ENCODE measurements at regions of chr1 and their contacts with region 1.

Region 1: GRCh38 chr1:214551436-214552173 is at the start of gene PTPN14:
- DNase-seq: peak; percentile 82
- ATAC-seq: peak; percentile 86
- H3K4me3 ChIP-seq: peak within 1 kb of the TSS; percentile 89 to 97 (median 90)
- H3K27ac ChIP-seq: peak within 1 kb of the TSS; percentile 64
- H3K4me1 ChIP-seq: peaks cover 59% of the 10 kb centered on the region
- H3K27me3 ChIP-seq: peaks cover 0 to 4% of the 10 kb centered on the region in 2 experiments; a peak in 2 of 5 replicates
- CTCF ChIP-seq: peak; percentile 48
- EP300 ChIP-seq: peak in 1 of 2 experiments; percentile 12; a peak in 1 of 4 replicates
- POLR2A ChIP-seq: peak; percentile 43 to 53; a peak in 2 of 4 replicates
- RAD21 ChIP-seq: peak; percentile 60
- total RNA-seq, gene PTPN14: 4.7 and 8.4 TPM in 2 replicates

Region 2: GRCh38 chr1:214446772-214447556 is 104.6 kb before region 1 on chr1:
- CTCF ChIA-PET with region 1: no interaction called
- POLR2A ChIA-PET with region 1: no interaction called
- in situ Hi-C with region 1: no loop called
- intact Hi-C with region 1: loop called (anchors 1 kb)
- DNase-seq: peak; percentile 85
- ATAC-seq: peak; percentile 99
- H3K4me3 ChIP-seq: peak overlapping the region; percentile 41 to 62 (median 56); a peak in 5 of 6 replicates
- H3K27ac ChIP-seq: peak overlapping the region; percentile 28
- H3K4me1 ChIP-seq: peaks cover 20% of the 10 kb centered on the region
- H3K27me3 ChIP-seq: no peaks in the 10 kb centered on the region; a peak in 1 of 5 replicates
- CTCF ChIP-seq: no peak
- EP300 ChIP-seq: 0 out of 4 replicates have a peak, but pooled peaks of 1 of the 2 experiments have one; percentile 17
- POLR2A ChIP-seq: no peak
- RAD21 ChIP-seq: no peak

Region 3: DNA sequence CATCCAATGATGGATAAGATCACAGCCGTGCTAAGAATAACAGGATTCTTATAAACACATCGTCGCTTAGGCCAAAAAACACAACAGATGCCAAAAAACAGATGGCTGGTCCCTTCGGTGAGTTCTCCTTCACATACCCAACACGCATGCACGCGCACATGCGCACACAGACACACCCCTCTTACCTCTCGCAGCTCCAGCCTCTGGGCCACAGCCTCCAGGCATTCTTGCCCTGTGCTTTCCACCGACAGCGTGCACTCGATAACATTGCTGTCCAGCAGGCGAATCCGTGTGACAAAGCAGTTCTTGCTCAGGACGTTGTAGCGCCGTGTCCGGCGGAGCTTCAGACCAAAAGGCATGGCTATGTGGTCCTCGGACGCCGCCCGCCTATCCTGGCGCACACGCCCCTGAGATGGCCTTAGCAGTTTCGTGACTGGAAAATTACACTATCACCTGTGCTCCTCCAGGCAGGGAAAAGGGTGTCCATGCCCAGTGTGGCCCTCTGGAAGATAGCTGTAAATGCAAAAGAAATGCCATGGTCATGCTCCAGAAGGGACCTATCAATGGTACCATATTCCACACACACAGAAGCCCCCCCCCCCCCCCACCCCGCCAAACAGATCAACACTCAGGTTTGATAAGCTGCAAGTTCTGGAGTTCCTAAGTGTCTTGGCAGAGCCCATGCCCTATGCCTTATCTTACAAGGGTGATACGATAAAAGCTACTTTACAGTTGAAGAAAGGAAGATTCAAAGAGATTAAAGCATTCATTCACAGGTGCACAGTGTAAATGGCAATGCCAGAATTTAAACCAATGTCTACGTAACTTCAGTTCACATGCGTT is 86.9 kb before region 1 on chr1:
- CTCF ChIA-PET with region 1: no interaction called
- POLR2A ChIA-PET with region 1: no interaction called
- in situ Hi-C with region 1: no loop called
- intact Hi-C with region 1: loop called (anchors 5 kb)
- DNase-seq: no peak
- ATAC-seq: no peak
- H3K4me3 ChIP-seq: no peak overlapping the region
- H3K27ac ChIP-seq: no peak overlapping the region
- H3K4me1 ChIP-seq: peaks cover 31% of the 10 kb centered on the region
- H3K27me3 ChIP-seq: no peaks in the 10 kb centered on the region
- CTCF ChIP-seq: no peak
- EP300 ChIP-seq: no peak
- POLR2A ChIP-seq: no peak
- RAD21 ChIP-seq: no peak

Region 4: GRCh38 chr1:214506972-214507482 is 44.6 kb before region 1 on chr1:
- CTCF ChIA-PET with region 1: no interaction called
- POLR2A ChIA-PET with region 1: interaction called, 3 read pairs
- in situ Hi-C with region 1: loop called (anchors 5 kb)
- intact Hi-C with region 1: loop called (anchors 2 kb)
- DNase-seq: peak; percentile 93
- ATAC-seq: peak; percentile 99
- H3K4me3 ChIP-seq: peak overlapping the region in 2 of 3 experiments; percentile 28 to 36; a peak in 2 of 6 replicates
- H3K27ac ChIP-seq: no peak overlapping the region
- H3K4me1 ChIP-seq: peaks cover 51% of the 10 kb centered on the region
- H3K27me3 ChIP-seq: no peaks in the 10 kb centered on the region
- CTCF ChIP-seq: no peak
- EP300 ChIP-seq: peak in 1 of 2 experiments; percentile 67; a peak in 2 of 4 replicates
- POLR2A ChIP-seq: no peak
- RAD21 ChIP-seq: no peak

Region 5: DNA sequence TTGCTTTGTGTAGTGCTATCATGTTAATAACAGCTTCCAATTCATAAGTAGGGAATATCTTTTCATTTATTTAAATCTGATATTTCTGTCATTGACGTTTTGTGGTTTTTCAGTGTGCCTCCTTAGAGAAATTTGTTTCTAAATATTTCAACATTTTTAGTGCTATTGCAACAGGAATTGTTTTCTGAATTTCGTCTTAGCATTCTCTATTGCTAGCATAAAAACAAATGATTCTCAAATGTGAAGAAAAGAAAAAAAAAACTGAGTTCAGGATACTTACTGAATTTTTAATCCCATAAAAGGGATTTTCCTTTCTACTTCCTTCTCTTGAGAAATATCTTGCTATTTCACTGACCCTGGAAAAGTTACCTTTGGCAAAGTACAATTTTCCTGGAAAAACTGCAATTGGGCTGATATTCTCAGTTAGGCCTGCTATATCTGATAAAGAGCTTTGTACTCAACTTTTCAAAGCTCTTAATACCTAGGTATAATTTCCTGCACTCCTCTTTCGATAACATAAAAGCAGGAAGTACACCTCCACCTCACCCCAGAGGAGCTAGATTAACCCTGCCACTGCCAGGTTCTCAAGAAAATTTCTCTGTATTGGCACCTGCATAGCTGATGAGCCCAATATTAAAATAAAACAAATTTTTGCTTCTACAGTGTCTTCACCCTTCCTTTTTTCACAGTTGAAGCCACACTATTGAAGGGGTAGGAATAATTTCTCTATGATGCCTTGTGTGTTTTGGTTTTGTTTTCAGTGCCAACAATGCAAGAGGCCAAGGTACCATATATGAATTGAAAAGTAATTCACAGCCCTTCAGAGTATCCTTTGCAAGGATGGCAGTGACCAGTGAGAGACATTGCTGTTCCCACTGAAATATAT is 35.8 kb before region 1 on chr1:
- CTCF ChIA-PET with region 1: no interaction called
- POLR2A ChIA-PET with region 1: no interaction called
- in situ Hi-C with region 1: no loop called
- intact Hi-C with region 1: loop called (anchors 2 kb)
- DNase-seq: no peak
- ATAC-seq: no peak
- H3K4me3 ChIP-seq: no peak overlapping the region
- H3K27ac ChIP-seq: no peak overlapping the region
- H3K4me1 ChIP-seq: peaks cover 16% of the 10 kb centered on the region
- H3K27me3 ChIP-seq: no peaks in the 10 kb centered on the region
- CTCF ChIP-seq: no peak
- EP300 ChIP-seq: no peak
- POLR2A ChIP-seq: no peak
- RAD21 ChIP-seq: no peak

Region 6: GRCh38 chr1:214573386-214574358 is 22.1 kb after region 1 on chr1:
- CTCF ChIA-PET with region 1: no interaction called
- POLR2A ChIA-PET with region 1: no interaction called
- in situ Hi-C with region 1: no loop called
- intact Hi-C with region 1: no loop called
- DNase-seq: no peak
- ATAC-seq: no peak
- H3K4me3 ChIP-seq: no peak overlapping the region
- H3K27ac ChIP-seq: no peak overlapping the region
- H3K4me1 ChIP-seq: no peaks in the 10 kb centered on the region
- H3K27me3 ChIP-seq: peaks cover 0 to 12% of the 10 kb centered on the region in 2 experiments; a peak in 3 of 5 replicates
- CTCF ChIP-seq: no peak
- EP300 ChIP-seq: no peak
- POLR2A ChIP-seq: no peak
- RAD21 ChIP-seq: no peak

Region 7: DNA sequence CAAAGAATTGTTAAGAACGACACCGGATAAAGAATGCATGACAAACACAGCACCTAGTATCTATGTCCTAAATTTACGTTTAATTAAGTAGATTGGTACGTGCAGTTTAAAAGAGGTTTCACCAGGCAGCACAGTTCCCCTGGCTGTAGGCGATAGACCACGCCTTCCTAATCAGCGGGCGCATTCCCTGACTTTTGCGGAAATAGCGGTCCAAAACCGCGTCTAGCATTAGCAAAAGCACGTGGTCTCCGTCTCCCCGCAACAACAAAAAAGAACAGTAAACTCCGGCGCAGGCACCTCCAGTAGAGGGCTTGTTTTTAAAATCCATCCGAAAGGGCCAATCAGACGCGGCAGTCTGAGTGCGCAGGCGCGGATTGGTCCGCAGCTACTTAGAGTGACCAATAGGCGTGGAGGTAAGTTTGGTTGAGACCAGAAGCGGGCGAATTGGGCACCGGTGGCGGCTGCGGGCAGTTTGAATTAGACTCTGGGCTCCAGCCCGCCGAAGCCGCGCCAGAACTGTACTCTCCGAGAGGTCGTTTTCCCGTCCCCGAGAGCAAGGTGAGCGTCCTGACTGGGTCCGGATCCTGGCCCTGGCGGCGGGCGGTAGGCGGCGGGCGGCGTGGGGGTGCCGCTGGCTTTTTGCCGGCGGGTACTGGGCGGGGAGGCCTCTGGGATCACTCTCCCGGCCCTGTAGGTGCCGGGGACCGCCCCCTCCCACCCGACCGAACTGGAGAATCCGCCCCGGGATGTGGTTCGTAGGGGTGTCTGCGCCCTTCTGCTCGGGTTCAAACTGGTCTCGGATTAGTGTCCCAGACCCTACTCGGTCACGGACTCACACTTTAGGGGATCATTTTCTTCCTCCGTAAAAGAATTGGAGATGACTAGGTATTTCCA is 51.4 kb after region 1 on chr1 and contains the start of gene CENPF:
- CTCF ChIA-PET with region 1: no interaction called
- POLR2A ChIA-PET with region 1: no interaction called
- in situ Hi-C with region 1: loop called (anchors 10 kb)
- intact Hi-C with region 1: no loop called
- DNase-seq: peak; percentile 98
- ATAC-seq: peak; percentile 99
- H3K4me3 ChIP-seq: peak within 1 kb of the TSS; percentile 80 to 90 (median 87)
- H3K27ac ChIP-seq: peak within 1 kb of the TSS; percentile 82
- H3K4me1 ChIP-seq: peaks cover 34% of the 10 kb centered on the region
- H3K27me3 ChIP-seq: no peaks in the 10 kb centered on the region; a peak in 1 of 5 replicates
- CTCF ChIP-seq: peak; percentile 16; the same call in 1 of the 2 replicates
- EP300 ChIP-seq: no peak
- POLR2A ChIP-seq: peak; percentile 58 to 80
- RAD21 ChIP-seq: no peak
- total RNA-seq, gene CENPF: 84.9 and 128 TPM in 2 replicates

Region 8: GRCh38 chr1:214739621-214740238 is 188.1 kb after region 1 on chr1:
- CTCF ChIA-PET with region 1: no interaction called
- POLR2A ChIA-PET with region 1: no interaction called
- in situ Hi-C with region 1: no loop called
- intact Hi-C with region 1: no loop called
- DNase-seq: no peak
- ATAC-seq: no peak
- H3K4me3 ChIP-seq: no peak overlapping the region
- H3K27ac ChIP-seq: no peak overlapping the region
- H3K4me1 ChIP-seq: no peaks in the 10 kb centered on the region
- H3K27me3 ChIP-seq: no peaks in the 10 kb centered on the region
- CTCF ChIP-seq: no peak
- EP300 ChIP-seq: no peak
- POLR2A ChIP-seq: no peak
- RAD21 ChIP-seq: no peak

Measured in HepG2 (cell line).